ENCODE measurements at regions of chr15 and their contacts with region 1.

Region 1: DNA sequence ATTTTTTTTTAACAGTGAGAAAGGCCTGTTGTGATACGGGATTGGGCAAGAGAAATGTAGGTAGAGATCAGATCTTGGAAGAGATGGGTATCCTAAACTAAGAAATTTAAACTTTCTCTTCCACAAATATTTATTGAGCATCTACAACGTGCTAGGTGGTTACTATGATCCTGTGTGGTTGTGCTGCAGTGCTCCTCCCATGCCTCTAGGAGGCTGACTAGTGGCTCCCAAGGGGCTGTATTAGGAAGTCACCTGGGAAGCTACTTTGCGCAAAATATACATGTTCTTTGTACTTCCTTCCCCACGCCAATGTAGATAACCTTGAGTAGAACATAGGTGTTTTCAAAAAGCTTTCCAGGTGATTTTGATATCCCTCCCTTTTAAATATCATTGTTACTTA is 27.2 kb downstream of the USP3 start:
- DNase-seq: peak in 2 of 9 experiments; percentile 22 to 33
- ATAC-seq: peak; percentile 42
- H3K4me3 ChIP-seq: no peak overlapping the region
- H3K4me3 Mint-ChIP-seq: no peak overlapping the region
- H3K27ac ChIP-seq: no peak overlapping the region
- H3K27ac Mint-ChIP-seq: no peak overlapping the region
- H3K4me1 ChIP-seq: peaks cover 61% of the 10 kb centered on the region
- H3K4me1 Mint-ChIP-seq: peaks cover 91% of the 10 kb centered on the region
- H3K27me3 ChIP-seq: no peaks in the 10 kb centered on the region
- H3K27me3 Mint-ChIP-seq: no peaks in the 10 kb centered on the region
- CTCF ChIP-seq: no peak

Region 2: DNA sequence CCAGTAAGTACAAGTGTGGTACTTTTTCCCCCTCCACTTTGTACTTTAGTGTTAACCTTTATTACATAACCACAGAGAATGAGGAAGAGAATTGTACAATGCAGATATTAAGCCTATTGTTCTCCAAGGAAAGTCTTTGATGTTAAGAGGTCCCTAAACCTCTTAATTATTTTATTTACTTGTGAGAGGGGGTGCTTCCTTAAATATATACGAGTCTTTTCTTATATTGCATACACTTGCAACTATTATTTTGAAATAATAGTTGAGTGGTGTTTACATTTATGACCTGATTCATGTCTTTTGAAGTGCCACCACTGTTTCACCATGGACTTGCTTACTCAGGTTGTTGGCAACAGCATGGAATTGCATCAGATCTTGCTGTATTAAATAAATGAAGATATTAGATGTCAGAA is 17.0 kb before region 1 on chr15:
- CTCF ChIA-PET with region 1: interaction called, 4 read pairs
- POLR2A ChIA-PET with region 1: no interaction called
- intact Hi-C with region 1: loop called in 1 of 2 experiments (anchors 1 kb)
- DNase-seq: peak in 1 of 9 experiments; percentile 31
- ATAC-seq: no peak
- H3K4me3 ChIP-seq: no peak overlapping the region
- H3K4me3 Mint-ChIP-seq: peak overlapping the region; percentile 26
- H3K27ac ChIP-seq: no peak overlapping the region
- H3K27ac Mint-ChIP-seq: peak overlapping the region; percentile 22
- H3K4me1 ChIP-seq: peaks cover 96% of the 10 kb centered on the region
- H3K4me1 Mint-ChIP-seq: peaks cover 90% of the 10 kb centered on the region
- H3K27me3 ChIP-seq: no peaks in the 10 kb centered on the region
- H3K27me3 Mint-ChIP-seq: no peaks in the 10 kb centered on the region
- CTCF ChIP-seq: no peak

Region 3: GRCh38 chr15:63573533-63573932 is 41.9 kb after region 1 on chr15:
- CTCF ChIA-PET with region 1: no interaction called
- POLR2A ChIA-PET with region 1: no interaction called
- intact Hi-C with region 1: loop called in 1 of 2 experiments (anchors 5 kb)
- DNase-seq: no peak
- ATAC-seq: no peak
- H3K4me3 ChIP-seq: no peak overlapping the region
- H3K4me3 Mint-ChIP-seq: no peak overlapping the region
- H3K27ac ChIP-seq: no peak overlapping the region
- H3K27ac Mint-ChIP-seq: peak overlapping the region; percentile 24
- H3K4me1 ChIP-seq: no peaks in the 10 kb centered on the region
- H3K4me1 Mint-ChIP-seq: peaks cover 9% of the 10 kb centered on the region
- H3K27me3 ChIP-seq: no peaks in the 10 kb centered on the region
- H3K27me3 Mint-ChIP-seq: no peaks in the 10 kb centered on the region
- CTCF ChIP-seq: no peak

Measured in CD8-positive, alpha-beta T cell (primary cell).